ENCODE measurements at regions of chr15 and their contacts with region 1.

Region 1: DNA sequence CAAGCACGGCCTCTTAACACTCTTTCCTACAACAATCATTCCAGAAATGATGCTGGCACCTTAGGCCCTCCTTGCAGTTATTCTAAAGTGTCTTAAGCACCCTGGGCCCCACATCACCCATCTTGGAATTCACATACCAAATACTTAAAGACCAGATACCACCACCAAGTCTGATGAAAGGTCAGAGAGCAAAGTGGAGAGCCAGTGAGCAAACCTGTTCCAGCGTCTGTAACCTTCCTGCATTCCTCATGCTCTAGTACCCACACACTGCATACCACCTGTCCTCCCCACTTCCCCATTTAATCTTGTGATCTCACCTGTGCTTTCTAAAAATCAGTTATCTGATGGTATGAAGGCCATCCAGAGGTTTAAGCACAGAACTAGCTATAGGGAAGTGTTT is 7.0 kb upstream of the SPG11 start:
- DNase-seq: no peak
- H3K4me3 ChIP-seq: no peak overlapping the region
- H3K4me3 Mint-ChIP-seq: peak overlapping the region in 7 of 8 donors; percentile 15 to 80 (median 71)
- H3K27ac ChIP-seq: peak overlapping the region; percentile 40
- H3K27ac Mint-ChIP-seq: peak overlapping the region; percentile 89 to 96 (median 96)
- H3K4me1 ChIP-seq: peaks cover 98% of the 10 kb centered on the region
- H3K4me1 Mint-ChIP-seq: peaks cover 67 to 96% (median 89%) of the 10 kb centered on the region in 4 donors
- H3K27me3 ChIP-seq: no peaks in the 10 kb centered on the region
- H3K27me3 Mint-ChIP-seq: no peaks in the 10 kb centered on the region

Region 2: DNA sequence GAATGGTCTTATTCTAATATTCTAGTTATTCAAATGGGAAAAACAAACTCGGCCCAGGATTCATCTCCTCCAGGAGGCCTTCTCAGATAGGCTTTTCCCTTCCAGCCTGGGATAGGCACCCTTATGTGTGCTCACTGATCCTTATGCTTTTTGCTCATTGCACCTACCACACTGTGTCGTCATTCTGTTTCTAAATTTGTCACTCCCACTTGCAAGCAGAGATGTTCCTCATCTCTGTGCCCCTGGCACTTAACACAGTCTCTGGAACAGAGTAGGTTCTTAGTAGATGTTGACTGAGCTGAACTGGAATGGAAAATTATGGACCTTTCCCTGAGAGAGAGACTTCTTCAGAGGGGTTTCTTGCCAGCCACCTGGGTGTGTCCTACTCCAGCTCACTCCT is 11.7 kb after region 1 on chr15:
- CTCF ChIA-PET with region 1: interaction called, 107 read pairs
- POLR2A ChIA-PET with region 1: interaction called, 1,003 read pairs
- intact Hi-C with region 1: loop called (anchors 1 kb)
- DNase-seq: no peak
- H3K4me3 ChIP-seq: peak overlapping the region in 1 of 2 donors; percentile 13
- H3K4me3 Mint-ChIP-seq: peak overlapping the region in 7 of 8 donors; percentile 64 to 82 (median 75)
- H3K27ac ChIP-seq: peak overlapping the region; percentile 70
- H3K27ac Mint-ChIP-seq: peak overlapping the region; percentile 86 to 96 (median 93)
- H3K4me1 ChIP-seq: peaks cover 75% of the 10 kb centered on the region
- H3K4me1 Mint-ChIP-seq: peaks cover 66 to 99% (median 83%) of the 10 kb centered on the region in 4 donors
- H3K27me3 ChIP-seq: no peaks in the 10 kb centered on the region
- H3K27me3 Mint-ChIP-seq: no peaks in the 10 kb centered on the region

Measured in CD4-positive, alpha-beta memory T cell (primary cell).